ENCODE measurements at regions of chr22 and their contacts with region 1.

Region 1: GRCh38 chr22:24423519-24424000 is 3.8 kb upstream of the ADORA2A start:
- DNase-seq: no peak
- H3K4me3 ChIP-seq: no peak overlapping the region
- CTCF ChIP-seq: no peak
- POLR2A ChIP-seq: no peak

Region 2: DNA sequence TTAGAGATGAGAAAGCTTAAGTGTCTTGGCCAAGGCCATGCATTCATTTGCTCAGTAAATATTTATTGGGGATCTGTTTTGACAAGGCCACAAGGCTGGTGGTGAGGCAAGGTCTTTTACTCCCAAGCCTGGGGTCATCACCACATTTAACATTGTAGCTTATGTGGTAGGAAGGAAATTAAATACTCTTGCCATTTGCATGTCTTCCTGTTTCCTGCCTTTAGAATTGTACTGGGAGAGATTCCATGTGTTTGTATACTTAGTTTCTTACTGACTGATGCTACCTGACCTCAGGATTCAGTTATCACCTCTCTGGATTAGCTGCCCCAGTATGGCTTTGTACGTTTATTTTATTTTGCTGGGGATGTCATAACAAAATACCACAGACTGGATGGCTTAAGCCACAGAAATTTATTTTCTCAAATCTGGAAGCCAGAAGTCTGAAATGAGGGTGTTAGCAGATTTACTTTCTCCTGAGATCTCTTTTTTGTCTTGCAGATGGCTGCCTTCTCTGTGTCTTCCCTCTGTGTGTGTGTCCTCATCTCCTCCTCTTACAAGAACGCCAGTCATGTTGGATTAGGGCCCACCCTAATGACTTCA is 108.1 kb before region 1 on chr22:
- intact Hi-C with region 1: no loop called
- DNase-seq: no peak
- H3K4me3 ChIP-seq: no peak overlapping the region
- CTCF ChIP-seq: no peak
- POLR2A ChIP-seq: no peak

Region 3: GRCh38 chr22:24521791-24522245 is 98.3 kb after region 1 on chr22:
- intact Hi-C with region 1: loop called (anchors 5 kb)
- DNase-seq: no peak
- H3K4me3 ChIP-seq: no peak overlapping the region
- CTCF ChIP-seq: no peak
- POLR2A ChIP-seq: no peak

Region 4: GRCh38 chr22:24789516-24789915 is 366.0 kb after region 1 on chr22:
- intact Hi-C with region 1: no loop called
- DNase-seq: no peak
- H3K4me3 ChIP-seq: no peak overlapping the region
- CTCF ChIP-seq: no peak
- POLR2A ChIP-seq: no peak

Region 5: DNA sequence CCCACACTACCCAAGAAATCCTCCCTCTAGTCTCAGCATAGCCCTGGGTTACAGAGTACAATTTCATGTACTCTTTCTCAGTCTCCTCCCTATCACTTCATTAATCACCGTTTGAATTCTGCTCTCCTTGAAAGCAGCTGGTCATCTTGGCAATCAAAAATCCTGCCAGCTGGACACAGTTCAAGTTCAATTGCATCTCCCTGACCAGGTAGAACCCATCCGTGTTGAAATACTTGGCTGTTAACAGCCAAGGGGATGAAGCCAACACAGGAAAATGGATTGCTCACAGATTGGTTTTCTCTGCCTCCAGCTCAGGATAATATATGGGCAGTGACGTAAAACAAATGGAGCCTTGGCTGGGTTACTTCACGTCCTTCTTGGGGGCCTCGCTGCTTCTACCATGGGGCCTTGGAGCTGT is 1085.8 kb after region 1 on chr22:
- intact Hi-C with region 1: no loop called
- DNase-seq: no peak
- H3K4me3 ChIP-seq: no peak overlapping the region
- CTCF ChIP-seq: no peak
- POLR2A ChIP-seq: no peak